CD4-positive, alpha-beta T cell (primary cell): ENCODE measurements at regions of chr5 and their contacts with region 1.

Region 1: DNA sequence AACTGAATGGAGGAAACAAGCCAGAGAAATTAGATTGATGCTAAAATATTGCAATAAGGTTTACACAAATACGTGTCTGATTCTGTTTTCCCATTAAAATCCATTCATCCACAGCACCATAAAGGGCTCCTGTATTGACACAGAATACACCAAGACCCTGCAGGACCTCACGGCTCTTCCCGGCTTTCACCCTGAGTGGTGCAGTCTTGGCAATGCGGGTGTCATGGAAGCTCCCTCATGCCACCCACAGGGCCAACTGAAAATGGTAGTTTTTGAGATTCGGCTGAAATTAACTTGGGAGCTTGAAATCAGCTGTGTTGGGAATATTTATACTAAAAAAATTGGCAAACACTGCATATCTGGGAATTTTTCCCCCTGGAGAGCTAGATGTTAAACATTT is 17.3 kb upstream of the EXOC3 start:
- DNase-seq: peak in 4 of 14 experiments; percentile 19 to 51 (median 42)
- ATAC-seq: no peak
- H3K4me3 ChIP-seq: no peak overlapping the region
- H3K4me3 Mint-ChIP-seq: no peak overlapping the region
- H3K27ac ChIP-seq: no peak overlapping the region
- H3K27ac Mint-ChIP-seq: no peak overlapping the region
- H3K4me1 ChIP-seq: no peaks in the 10 kb centered on the region
- H3K4me1 Mint-ChIP-seq: no peaks in the 10 kb centered on the region
- H3K27me3 ChIP-seq: no peaks in the 10 kb centered on the region
- H3K27me3 Mint-ChIP-seq: peaks cover 5% of the 10 kb centered on the region
- CTCF ChIP-seq: peak; percentile 55

Region 2: GRCh38 chr5:317086-317811 is 108.5 kb before region 1 on chr5:
- CTCF ChIA-PET with region 1: no interaction called
- POLR2A ChIA-PET with region 1: no interaction called
- intact Hi-C with region 1: loop called in 1 of 2 experiments (anchors 2 kb)
- DNase-seq: peak in 4 of 14 experiments; percentile 9 to 51 (median 31)
- ATAC-seq: peak; percentile 29
- H3K4me3 ChIP-seq: no peak overlapping the region
- H3K4me3 Mint-ChIP-seq: no peak overlapping the region
- H3K27ac ChIP-seq: no peak overlapping the region
- H3K27ac Mint-ChIP-seq: no peak overlapping the region
- H3K4me1 ChIP-seq: peaks cover 18% of the 10 kb centered on the region
- H3K4me1 Mint-ChIP-seq: no peaks in the 10 kb centered on the region
- H3K27me3 ChIP-seq: peaks cover 20 to 35% of the 10 kb centered on the region in 2 experiments
- H3K27me3 Mint-ChIP-seq: peaks cover 14% of the 10 kb centered on the region
- CTCF ChIP-seq: no peak

Region 3: GRCh38 chr5:411728-412127 is 14.0 kb before region 1 on chr5:
- CTCF ChIA-PET with region 1: no interaction called
- POLR2A ChIA-PET with region 1: no interaction called
- intact Hi-C with region 1: no loop called
- DNase-seq: peak in 1 of 14 experiments; percentile 15
- ATAC-seq: no peak
- H3K4me3 ChIP-seq: no peak overlapping the region
- H3K4me3 Mint-ChIP-seq: no peak overlapping the region
- H3K27ac ChIP-seq: no peak overlapping the region
- H3K27ac Mint-ChIP-seq: no peak overlapping the region
- H3K4me1 ChIP-seq: no peaks in the 10 kb centered on the region
- H3K4me1 Mint-ChIP-seq: no peaks in the 10 kb centered on the region
- H3K27me3 ChIP-seq: no peaks in the 10 kb centered on the region
- H3K27me3 Mint-ChIP-seq: peaks cover 12% of the 10 kb centered on the region
- CTCF ChIP-seq: no peak

Region 4: DNA sequence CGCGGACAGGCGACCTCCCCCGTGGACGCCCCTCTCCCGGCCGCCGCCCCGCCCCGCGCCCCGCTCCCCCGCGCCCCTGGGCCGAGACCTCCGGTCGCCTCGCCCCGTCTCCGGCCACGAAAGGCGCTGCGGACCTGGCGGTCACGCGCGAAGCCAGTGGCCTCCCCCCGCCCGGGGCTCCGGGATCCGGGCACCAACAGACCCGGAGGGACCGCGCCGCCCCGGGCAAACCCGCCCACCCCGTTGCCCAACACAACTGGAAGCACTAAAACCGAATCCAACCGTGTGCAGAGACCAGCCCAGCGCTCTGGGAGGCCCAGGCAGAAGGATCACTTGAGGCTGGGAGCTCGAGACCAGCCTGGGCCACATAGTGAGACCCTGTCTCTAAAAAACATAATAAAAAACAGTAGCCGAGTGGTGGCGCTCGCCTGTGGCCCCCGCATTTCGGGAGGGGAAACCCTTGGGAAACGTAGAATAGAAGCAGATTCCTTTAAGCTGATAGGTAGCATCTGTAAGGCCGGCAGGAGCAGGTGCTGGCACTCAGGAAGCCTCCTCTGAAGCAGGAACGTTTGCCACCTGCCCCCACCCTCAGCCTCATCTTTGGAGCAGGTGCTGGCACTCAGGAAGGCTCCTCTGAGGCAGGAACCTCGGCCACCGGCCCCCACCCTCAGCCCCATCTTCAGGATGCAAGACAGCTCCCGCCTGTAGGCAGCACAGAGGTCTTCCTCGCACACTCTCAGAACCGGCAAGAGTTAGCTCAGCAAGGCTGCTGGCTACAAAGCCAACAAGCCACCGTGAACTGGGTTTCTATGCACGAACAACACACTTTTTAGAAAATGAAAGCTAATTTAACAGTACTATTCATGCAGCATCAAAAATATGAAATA is 103.2 kb after region 1 on chr5:
- CTCF ChIA-PET with region 1: no interaction called
- POLR2A ChIA-PET with region 1: no interaction called
- intact Hi-C with region 1: no loop called
- DNase-seq: no peak
- ATAC-seq: no peak
- H3K4me3 ChIP-seq: no peak overlapping the region
- H3K4me3 Mint-ChIP-seq: no peak overlapping the region
- H3K27ac ChIP-seq: no peak overlapping the region
- H3K27ac Mint-ChIP-seq: no peak overlapping the region
- H3K4me1 ChIP-seq: peaks cover 21% of the 10 kb centered on the region
- H3K4me1 Mint-ChIP-seq: peaks cover 31% of the 10 kb centered on the region
- H3K27me3 ChIP-seq: peaks cover 44 to 82% of the 10 kb centered on the region in 2 experiments
- H3K27me3 Mint-ChIP-seq: peaks cover 60% of the 10 kb centered on the region
- CTCF ChIP-seq: no peak